ENCODE measurements at regions of chr10 and their contacts with region 1.

Region 1: DNA sequence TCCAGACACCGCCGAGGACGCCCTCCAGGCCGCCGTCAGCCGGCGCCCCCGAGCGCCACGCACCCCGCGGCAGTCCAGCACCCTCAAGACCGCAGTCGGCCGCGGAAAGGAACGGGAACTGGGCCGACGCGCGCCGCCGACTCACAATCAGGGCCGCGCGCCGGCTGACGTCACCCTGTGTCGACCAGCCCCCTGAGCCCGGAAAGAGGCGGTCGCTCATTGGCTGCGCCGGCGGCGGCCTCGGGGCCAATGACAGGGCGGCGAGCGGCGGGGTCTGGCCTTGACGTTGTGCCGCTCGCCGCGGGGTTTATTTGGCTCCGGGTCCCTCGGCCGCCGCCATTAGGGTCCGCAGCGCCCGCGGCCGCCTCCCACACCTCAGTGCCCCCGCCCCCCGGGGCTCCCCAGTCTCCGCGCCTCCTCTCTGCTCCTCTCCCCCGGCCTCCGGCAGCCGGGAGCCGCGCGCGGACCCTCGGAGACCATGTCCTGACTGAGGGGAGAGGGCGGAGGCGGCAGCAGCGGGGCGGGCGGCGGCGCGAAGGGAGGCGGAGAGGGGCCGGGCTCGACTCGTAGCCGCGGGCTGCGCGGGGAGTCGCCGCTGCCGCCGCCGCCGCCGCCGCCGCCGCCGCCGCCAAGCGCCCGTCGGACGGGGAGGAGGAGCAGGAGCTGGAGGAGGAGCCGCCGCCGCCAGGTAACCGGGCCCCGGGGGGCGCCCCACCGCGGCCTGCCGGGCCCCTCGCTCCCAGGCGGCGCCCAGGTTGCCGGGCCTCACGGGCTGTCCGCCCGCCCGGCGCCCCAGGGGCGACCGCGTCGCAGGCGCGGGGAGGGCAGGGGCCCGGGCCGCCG is 25.1 kb upstream of the ZRANB1 start:
- DNase-seq: peak; percentile 98
- ATAC-seq: peak; percentile 92
- H3K4me3 Mint-ChIP-seq: peak overlapping the region; percentile 84
- H3K27ac Mint-ChIP-seq: peak overlapping the region; percentile 90
- H3K4me1 Mint-ChIP-seq: peaks cover 37% of the 10 kb centered on the region
- H3K27me3 Mint-ChIP-seq: peaks cover 2% of the 10 kb centered on the region
- CTCF ChIP-seq: no peak

Region 2: DNA sequence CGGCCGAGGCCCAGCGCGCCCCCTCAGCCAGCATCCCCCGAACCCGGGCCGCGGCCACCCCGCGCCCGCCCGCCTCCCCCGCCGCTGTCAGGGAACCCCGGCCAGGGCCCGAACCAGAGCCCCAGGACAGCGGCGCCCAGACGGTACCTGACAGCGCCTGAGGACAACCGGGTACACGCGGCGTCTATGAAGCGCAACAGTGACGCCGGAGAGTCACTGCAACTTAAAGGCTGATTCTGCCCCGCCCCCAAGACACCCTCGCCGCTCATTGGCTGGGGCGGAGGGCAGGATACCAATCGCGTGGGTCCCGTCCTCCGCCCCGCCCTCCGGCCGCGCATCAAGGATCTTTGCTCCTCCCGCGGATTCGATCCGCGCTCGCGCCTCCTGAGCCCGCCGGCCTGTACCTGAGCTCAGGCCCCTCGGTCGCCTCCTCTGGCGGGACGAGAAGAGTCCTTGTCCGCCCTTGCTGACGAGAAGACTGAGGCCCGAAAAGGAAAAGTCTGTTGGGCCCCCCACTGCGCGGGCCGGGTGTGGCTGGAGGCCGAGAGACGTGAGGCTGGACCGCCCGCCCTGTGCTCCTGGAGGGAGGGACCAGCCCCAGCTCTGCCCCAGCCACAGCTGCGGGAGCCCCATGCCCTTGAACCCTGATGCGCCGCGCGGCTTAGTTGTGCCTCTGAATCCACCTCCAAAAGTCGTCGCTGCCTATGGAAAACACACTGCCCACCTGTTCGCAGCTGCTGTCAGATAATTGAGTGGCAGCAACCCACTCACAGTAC is 497.9 kb before region 1 on chr10 and contains the start of gene OAT:
- CTCF ChIA-PET with region 1: no interaction called
- POLR2A ChIA-PET with region 1: no interaction called
- intact Hi-C with region 1: loop called (anchors 2 kb)
- DNase-seq: peak; percentile 92
- ATAC-seq: peak; percentile 97
- H3K4me3 Mint-ChIP-seq: peak within 1 kb of the TSS; percentile 82
- H3K27ac Mint-ChIP-seq: peak within 1 kb of the TSS; percentile 46
- H3K4me1 Mint-ChIP-seq: peaks cover 12% of the 10 kb centered on the region
- H3K27me3 Mint-ChIP-seq: peaks cover 19% of the 10 kb centered on the region
- CTCF ChIP-seq: no peak
- total RNA-seq, gene OAT: 19.6 and 20.1 TPM in 2 replicates

Region 3: GRCh38 chr10:124530215-124530665 is 386.6 kb before region 1 on chr10:
- CTCF ChIA-PET with region 1: no interaction called
- POLR2A ChIA-PET with region 1: no interaction called
- intact Hi-C with region 1: loop called (anchors 1 kb)
- DNase-seq: peak; percentile 86
- ATAC-seq: peak; percentile 91
- H3K4me3 Mint-ChIP-seq: no peak overlapping the region
- H3K27ac Mint-ChIP-seq: peak overlapping the region; percentile 71
- H3K4me1 Mint-ChIP-seq: peaks cover 56% of the 10 kb centered on the region
- H3K27me3 Mint-ChIP-seq: no peaks in the 10 kb centered on the region
- CTCF ChIP-seq: no peak

Region 4: GRCh38 chr10:124612611-124613498 is 304.0 kb before region 1 on chr10:
- CTCF ChIA-PET with region 1: no interaction called
- POLR2A ChIA-PET with region 1: no interaction called
- intact Hi-C with region 1: no loop called
- DNase-seq: no peak
- ATAC-seq: peak; percentile 54
- H3K4me3 Mint-ChIP-seq: peak overlapping the region; percentile 45
- H3K27ac Mint-ChIP-seq: peak overlapping the region; percentile 96
- H3K4me1 Mint-ChIP-seq: peaks cover 83% of the 10 kb centered on the region
- H3K27me3 Mint-ChIP-seq: no peaks in the 10 kb centered on the region
- CTCF ChIP-seq: no peak

Region 5: GRCh38 chr10:124802313-124802675 is 114.5 kb before region 1 on chr10:
- CTCF ChIA-PET with region 1: no interaction called
- POLR2A ChIA-PET with region 1: interaction called, 15 read pairs
- intact Hi-C with region 1: loop called (anchors 1 kb)
- DNase-seq: no peak
- ATAC-seq: peak; percentile 61
- H3K4me3 Mint-ChIP-seq: peak overlapping the region; percentile 92
- H3K27ac Mint-ChIP-seq: peak overlapping the region; percentile 93
- H3K4me1 Mint-ChIP-seq: peaks cover 18% of the 10 kb centered on the region
- H3K27me3 Mint-ChIP-seq: peaks cover 2% of the 10 kb centered on the region
- CTCF ChIP-seq: no peak

Region 6: DNA sequence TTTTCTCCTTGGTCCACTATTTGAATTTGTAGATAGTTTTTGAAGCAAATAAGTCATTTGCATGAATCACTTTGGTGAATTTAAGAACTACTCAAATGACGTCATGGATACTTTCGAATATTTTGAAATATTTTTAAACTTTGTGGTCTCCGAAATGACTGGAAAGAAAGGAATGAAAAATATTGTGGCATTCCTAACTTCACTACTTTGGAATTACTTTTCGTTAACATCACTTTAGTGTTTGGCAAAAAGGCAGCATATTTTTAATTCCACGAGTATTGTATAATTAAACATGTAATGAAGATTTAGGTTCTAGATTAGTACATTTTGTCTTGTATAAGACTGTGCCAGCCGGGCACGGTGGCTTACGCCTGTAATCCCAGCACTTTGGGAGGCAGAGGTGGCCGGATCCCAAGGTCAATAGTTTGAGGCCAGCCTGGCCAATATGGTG is 10.2 kb before region 1 on chr10:
- CTCF ChIA-PET with region 1: no interaction called
- POLR2A ChIA-PET with region 1: no interaction called
- intact Hi-C with region 1: no loop called
- DNase-seq: no peak
- ATAC-seq: no peak
- H3K4me3 Mint-ChIP-seq: no peak overlapping the region
- H3K27ac Mint-ChIP-seq: no peak overlapping the region
- H3K4me1 Mint-ChIP-seq: no peaks in the 10 kb centered on the region
- H3K27me3 Mint-ChIP-seq: peaks cover 12% of the 10 kb centered on the region
- CTCF ChIP-seq: no peak

Region 7: GRCh38 chr10:125719146-125720001 is 802.6 kb after region 1 on chr10 and contains the start of gene EDRF1:
- CTCF ChIA-PET with region 1: no interaction called
- POLR2A ChIA-PET with region 1: interaction called, 7 read pairs
- intact Hi-C with region 1: loop called (anchors 1 kb)
- DNase-seq: peak; percentile 97
- ATAC-seq: peak; percentile 96
- H3K4me3 Mint-ChIP-seq: peak within 1 kb of the TSS; percentile 99
- H3K27ac Mint-ChIP-seq: peak within 1 kb of the TSS; percentile 96
- H3K4me1 Mint-ChIP-seq: peaks cover 29% of the 10 kb centered on the region
- H3K27me3 Mint-ChIP-seq: no peaks in the 10 kb centered on the region
- CTCF ChIP-seq: no peak
- total RNA-seq, gene EDRF1: 41.6 and 52.7 TPM in 2 replicates

Measured in activated B cell treated with CpG ODN at 0.5 μM for 24 hours (primary cell).